Activated B cell treated with CpG ODN at 0.5 μM for 24 hours (primary cell): ENCODE measurements at regions of chr5 and their contacts with region 1.

Region 1: GRCh38 chr5:139574641-139575312 is 13.6 kb downstream of the UBE2D2 start:
- DNase-seq: no peak
- ATAC-seq: peak; percentile 70
- H3K4me3 Mint-ChIP-seq: no peak overlapping the region
- H3K27ac Mint-ChIP-seq: peak overlapping the region; percentile 42
- H3K4me1 Mint-ChIP-seq: peaks cover 81% of the 10 kb centered on the region
- H3K27me3 Mint-ChIP-seq: no peaks in the 10 kb centered on the region
- CTCF ChIP-seq: peak; percentile 28

Region 2: DNA sequence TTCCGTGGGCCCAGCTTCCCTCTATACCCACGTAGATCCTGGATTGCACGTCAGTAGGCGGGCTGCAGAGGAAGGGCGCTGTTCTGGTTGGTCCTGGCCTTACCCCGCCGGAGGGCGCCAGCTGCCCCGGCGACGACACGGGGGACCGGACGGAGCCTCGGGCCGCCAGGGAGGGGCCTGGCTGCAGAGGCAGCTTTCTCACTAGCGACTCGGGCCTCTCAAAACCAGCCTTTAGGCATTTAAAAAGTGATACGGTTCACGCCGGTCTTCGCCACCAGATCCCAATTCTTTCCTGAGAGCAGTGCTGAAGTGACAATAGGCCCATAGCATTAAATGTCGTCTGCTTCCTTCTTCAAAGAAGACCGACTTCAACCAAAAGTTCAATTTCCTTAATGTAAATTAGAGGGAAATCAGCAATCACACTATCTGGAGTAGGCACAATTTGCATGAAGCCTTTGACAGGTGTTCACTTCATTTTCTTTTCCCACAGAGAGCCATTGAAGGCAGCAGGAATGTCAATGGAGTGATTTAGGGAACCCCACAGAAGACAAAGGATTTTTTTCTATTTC is 31.3 kb before region 1 on chr5:
- CTCF ChIA-PET with region 1: interaction called, 7 read pairs
- POLR2A ChIA-PET with region 1: no interaction called
- intact Hi-C with region 1: loop called (anchors 1 kb)
- DNase-seq: peak; percentile 66
- ATAC-seq: peak; percentile 98
- H3K4me3 Mint-ChIP-seq: peak overlapping the region; percentile 74
- H3K27ac Mint-ChIP-seq: peak overlapping the region; percentile 86
- H3K4me1 Mint-ChIP-seq: peaks cover 14% of the 10 kb centered on the region
- H3K27me3 Mint-ChIP-seq: no peaks in the 10 kb centered on the region
- CTCF ChIP-seq: no peak

Region 3: GRCh38 chr5:139593716-139594319 is 19.0 kb after region 1 on chr5:
- CTCF ChIA-PET with region 1: interaction called, 5 read pairs
- POLR2A ChIA-PET with region 1: interaction called, 8 read pairs
- intact Hi-C with region 1: loop called (anchors 2 kb)
- DNase-seq: no peak
- ATAC-seq: no peak
- H3K4me3 Mint-ChIP-seq: no peak overlapping the region
- H3K27ac Mint-ChIP-seq: no peak overlapping the region
- H3K4me1 Mint-ChIP-seq: peaks cover 72% of the 10 kb centered on the region
- H3K27me3 Mint-ChIP-seq: no peaks in the 10 kb centered on the region
- CTCF ChIP-seq: no peak

Region 4: DNA sequence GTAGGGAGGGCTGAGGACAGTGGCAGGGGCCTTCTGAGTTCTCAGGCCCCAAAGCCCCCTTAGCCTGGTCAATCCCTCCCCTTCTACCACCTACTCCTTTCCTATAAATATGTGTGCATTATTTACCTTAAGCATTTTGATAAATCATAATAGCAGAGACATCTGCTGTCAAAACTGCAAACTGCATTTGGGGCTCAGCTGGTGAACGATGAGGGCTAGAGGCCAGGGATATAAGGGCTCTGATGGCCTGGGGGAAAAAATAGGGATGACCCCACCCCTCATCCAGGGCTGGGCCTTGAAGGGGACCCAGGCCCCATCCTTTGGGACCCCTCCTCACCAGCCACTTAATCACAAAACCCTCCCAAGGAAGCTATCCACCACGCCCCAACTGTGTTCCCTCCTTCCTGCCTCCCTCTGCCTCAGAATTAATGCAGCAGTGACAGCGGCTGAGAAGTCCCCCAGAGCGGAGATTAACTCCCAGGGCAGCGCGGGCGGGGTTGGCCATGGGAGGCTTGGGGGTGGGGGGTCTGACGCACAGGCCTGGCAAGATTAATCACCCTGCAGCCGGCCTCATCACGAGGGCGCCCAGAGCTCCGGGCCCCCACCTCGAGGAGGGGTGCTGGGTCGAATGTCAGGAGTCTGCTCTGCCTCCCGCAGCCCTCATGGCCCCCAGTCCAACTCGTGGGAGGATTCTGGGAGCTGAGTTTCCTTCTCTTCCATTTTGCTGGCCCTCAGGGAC is 115.5 kb after region 1 on chr5:
- CTCF ChIA-PET with region 1: interaction called, 4 read pairs
- POLR2A ChIA-PET with region 1: no interaction called
- intact Hi-C with region 1: loop called (anchors 2 kb)
- DNase-seq: no peak
- ATAC-seq: peak; percentile 56
- H3K4me3 Mint-ChIP-seq: no peak overlapping the region
- H3K27ac Mint-ChIP-seq: peak overlapping the region; percentile 67
- H3K4me1 Mint-ChIP-seq: peaks cover 53% of the 10 kb centered on the region
- H3K27me3 Mint-ChIP-seq: no peaks in the 10 kb centered on the region
- CTCF ChIP-seq: peak; percentile 19